ENCODE measurements at regions of chr15 and their contacts with region 1.

Region 1: DNA sequence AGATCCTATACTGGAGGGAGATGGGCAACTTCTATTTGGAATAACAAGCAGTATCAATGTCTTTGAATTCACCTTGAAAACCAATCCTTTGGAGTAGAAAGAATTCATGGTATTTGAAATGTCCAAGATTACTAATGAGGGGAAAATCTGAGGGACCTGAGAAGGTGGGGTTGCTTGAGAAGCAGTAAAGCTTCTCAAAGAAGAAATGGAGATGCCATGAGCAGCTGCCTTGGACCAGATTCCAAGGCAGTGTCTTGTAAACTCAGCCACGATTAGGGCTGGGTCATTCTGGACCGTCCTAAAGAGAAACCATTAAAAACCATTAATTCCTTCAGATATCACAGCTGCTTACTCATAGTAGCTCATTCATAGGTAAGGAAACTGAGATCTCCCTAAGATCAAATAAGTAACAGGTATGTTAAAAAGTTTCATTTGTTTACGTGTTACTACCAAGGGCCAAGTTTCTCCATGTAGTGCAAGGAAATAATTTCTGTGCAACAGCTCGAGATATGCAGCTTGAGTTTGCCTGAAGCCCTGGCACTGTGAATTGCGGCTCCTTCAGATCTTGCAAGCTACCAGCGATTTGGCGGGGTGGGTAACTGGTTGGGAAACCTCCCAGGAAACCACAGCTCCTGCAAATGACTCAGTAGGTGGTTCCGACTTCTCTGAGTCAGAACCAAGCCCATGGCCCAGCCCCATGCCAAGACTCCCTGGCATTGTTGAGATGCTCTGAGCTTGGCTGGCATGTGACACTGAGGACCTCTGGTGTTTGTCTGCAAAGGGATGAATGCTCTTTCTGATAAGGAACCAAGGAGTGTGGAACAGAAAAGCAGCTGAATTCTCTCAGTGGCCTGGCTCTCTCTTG is 296.8 kb downstream of the RORA start:
- DNase-seq: peak; percentile 72 to 92
- H3K4me3 ChIP-seq: no peak overlapping the region
- CTCF ChIP-seq: no peak
- POLR2A ChIP-seq: no peak

Region 2: DNA sequence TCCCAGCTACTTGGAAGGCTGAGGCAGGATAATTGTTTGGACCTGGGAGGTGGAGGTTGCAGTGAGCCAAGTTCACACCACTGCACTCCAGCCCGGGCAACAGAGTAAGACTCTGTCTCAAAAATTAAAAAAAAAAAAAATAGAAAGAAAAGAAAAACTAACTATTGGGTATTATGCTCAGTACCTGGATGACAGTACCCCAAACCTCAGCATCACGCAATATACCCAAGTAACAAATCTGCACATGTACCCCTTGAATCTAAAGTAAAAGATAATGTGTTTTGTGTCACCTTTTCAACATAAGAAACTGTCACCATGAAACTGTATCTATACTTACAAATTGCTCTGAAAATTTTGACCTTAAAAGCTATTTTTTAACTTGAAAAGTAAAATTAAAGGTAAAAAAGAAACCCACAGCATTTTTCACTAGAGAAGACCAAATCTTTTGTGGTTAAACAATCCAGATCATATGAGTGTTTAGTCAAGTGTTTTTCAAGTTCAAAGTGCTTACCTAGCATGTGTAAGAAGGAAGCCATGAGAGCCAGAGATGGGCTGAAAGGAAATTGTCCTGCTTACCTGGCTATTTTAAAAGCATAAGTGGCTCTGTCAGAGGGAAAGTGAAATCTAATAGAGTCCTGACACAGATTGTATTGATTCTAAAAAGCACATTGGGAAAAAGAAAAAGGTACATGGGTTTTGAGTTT is 1610.1 kb before region 1 on chr15:
- intact Hi-C with region 1: no loop called
- DNase-seq: no peak
- H3K4me3 ChIP-seq: no peak overlapping the region
- CTCF ChIP-seq: no peak
- POLR2A ChIP-seq: no peak

Region 3: DNA sequence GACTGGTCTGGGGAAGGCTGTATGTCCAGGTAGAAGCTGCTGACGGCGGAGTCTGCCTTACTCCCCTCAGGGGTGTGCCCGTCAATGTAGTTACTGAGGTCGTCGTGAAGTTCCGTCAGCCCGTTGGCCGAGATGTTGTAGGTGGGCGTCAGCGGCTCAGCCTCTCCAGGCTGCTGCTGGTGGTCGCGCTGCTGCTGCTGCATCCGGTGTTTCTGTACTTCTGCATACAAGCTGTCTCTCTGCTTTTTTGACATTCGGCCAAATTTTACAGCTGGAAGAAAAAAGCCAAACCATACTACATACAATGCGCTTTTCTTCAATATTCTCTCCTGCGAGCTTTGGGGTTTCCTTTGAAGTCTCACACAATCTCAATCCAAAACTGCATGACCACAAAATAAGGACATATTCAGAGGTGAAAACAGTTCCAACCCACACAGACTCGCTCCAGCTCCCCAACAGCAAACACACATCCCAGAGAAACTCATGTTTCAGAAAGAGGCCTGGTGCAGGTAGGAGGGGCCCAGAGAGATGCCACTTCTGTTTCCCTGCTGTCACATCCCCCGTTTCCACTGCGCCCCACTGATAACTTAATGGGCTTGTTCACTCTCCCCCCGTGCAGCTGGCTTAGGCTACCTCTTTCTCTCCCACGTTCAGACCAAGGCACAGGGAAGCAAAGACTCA is 420.8 kb before region 1 on chr15:
- intact Hi-C with region 1: loop called (anchors 10 kb)
- DNase-seq: no peak
- H3K4me3 ChIP-seq: no peak overlapping the region
- CTCF ChIP-seq: no peak
- POLR2A ChIP-seq: no peak

Region 4: GRCh38 chr15:60945196-60945595 is 12.9 kb after region 1 on chr15:
- intact Hi-C with region 1: loop called (anchors 1 kb)
- DNase-seq: no peak
- H3K4me3 ChIP-seq: no peak overlapping the region
- CTCF ChIP-seq: no peak
- POLR2A ChIP-seq: no peak